Endothelial cell of umbilical vein (primary cell): ENCODE measurements at regions of chr1 and their contacts with region 1.

Region 1: DNA sequence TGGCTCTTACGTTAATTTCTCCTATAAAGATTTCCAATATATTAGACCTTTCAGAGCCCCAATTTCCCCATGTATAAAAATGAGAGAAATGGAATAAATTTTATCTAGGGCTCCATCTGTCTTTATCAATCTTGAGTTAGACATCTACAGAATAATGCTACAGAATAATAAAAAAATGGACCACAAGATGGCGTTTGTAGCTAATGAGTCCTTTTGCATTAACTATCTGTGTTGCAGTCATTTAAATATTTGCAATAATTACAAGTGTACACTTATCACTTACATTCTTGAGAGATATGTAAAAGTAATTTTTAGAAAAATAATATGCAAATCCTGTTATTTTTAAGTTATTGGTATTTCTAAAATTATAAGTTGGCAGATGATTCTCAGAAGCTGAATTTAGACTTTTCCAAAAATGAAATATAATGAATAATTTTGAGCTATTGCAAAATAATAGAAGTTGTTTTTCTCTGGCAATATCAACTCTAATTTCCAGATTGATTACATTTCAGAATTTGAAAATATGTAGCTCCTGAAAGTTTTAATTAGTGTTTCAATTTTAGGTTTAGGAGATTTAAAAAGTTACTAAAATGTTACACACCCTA is 87.7 kb downstream of the SNX7 start:
- DNase-seq: peak; percentile 32
- H3K4me3 ChIP-seq: no peak overlapping the region
- H3K27ac ChIP-seq: no peak overlapping the region
- H3K4me1 ChIP-seq: no peaks in the 10 kb centered on the region
- H3K27me3 ChIP-seq: no peaks in the 10 kb centered on the region
- CTCF ChIP-seq: peak; percentile 10 to 22
- POLR2A ChIP-seq: no peak

Region 2: GRCh38 chr1:98732985-98733781 is 16.1 kb before region 1 on chr1:
- CTCF ChIA-PET with region 1: interaction called, 30 read pairs
- POLR2A ChIA-PET with region 1: no interaction called
- dilution Hi-C with region 1: no loop called
- intact Hi-C with region 1: no loop called
- DNase-seq: no peak
- H3K4me3 ChIP-seq: no peak overlapping the region
- H3K27ac ChIP-seq: no peak overlapping the region
- H3K4me1 ChIP-seq: no peaks in the 10 kb centered on the region
- H3K27me3 ChIP-seq: no peaks in the 10 kb centered on the region
- CTCF ChIP-seq: no peak
- POLR2A ChIP-seq: no peak

Region 3: DNA sequence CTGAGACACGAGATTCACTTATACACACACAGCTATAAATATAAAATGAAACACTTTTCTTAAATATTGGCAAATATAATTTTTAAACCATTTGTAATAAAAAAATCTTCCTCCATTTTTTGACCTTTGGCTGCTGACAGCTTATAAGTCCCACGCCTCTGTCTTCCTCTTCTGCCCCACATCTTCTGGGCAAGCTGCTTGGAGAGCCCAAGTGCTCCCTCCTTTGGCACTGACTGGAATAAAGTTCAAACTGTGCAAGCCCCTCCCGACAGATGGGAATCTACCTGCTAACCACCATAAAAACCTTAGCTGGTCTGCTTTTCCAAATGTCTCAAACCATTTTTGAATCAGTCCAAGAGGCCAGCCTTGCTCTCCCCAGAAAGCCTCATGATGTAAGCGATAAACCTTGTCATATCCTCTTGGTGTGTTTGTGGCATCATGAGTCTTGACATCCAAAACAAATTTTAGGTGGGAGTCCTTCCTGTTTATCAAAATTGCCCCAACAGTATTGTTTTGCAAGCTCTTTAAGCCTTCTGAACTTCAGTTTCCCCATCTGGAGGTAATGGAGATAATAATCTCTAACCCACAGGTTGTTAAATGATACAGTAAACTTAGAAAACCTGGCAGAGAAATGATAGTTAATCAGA is 12.1 kb after region 1 on chr1:
- CTCF ChIA-PET with region 1: interaction called, 41 read pairs
- POLR2A ChIA-PET with region 1: no interaction called
- dilution Hi-C with region 1: no loop called
- intact Hi-C with region 1: no loop called
- DNase-seq: no peak
- H3K4me3 ChIP-seq: no peak overlapping the region
- H3K27ac ChIP-seq: no peak overlapping the region
- H3K4me1 ChIP-seq: no peaks in the 10 kb centered on the region
- H3K27me3 ChIP-seq: no peaks in the 10 kb centered on the region
- CTCF ChIP-seq: no peak
- POLR2A ChIP-seq: no peak